Transverse colon (tissue), 4 donors: ENCODE measurements at regions of chrX and their contacts with region 1.

Region 1: DNA sequence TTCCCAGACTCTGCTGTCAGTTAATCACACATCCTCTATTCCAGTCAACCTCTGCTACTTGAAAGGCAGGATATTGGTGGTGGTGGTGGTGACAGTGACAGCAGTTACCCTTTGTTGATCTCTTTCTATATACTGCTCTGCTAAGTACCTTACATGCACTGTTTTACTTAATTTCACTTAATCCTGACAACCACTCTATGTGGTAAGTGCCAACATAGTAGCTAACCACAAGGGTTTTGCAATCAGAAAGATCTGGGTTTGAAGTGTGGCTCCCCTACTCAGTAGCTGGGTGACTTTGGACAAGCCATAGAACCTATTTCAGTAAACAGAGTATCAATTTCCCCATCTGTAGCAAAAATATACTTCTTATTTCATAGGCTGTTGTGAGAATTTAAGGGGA is 24.2 kb upstream of the F9 start:
- DNase-seq: no peak
- H3K4me3 ChIP-seq: no peak overlapping the region
- H3K27ac ChIP-seq: no peak overlapping the region
- H3K4me1 ChIP-seq: no peaks in the 10 kb centered on the region
- H3K27me3 ChIP-seq: no peaks in the 10 kb centered on the region
- CTCF ChIP-seq: no peak
- EP300 ChIP-seq: no peak
- POLR2A ChIP-seq: no peak

Region 2: DNA sequence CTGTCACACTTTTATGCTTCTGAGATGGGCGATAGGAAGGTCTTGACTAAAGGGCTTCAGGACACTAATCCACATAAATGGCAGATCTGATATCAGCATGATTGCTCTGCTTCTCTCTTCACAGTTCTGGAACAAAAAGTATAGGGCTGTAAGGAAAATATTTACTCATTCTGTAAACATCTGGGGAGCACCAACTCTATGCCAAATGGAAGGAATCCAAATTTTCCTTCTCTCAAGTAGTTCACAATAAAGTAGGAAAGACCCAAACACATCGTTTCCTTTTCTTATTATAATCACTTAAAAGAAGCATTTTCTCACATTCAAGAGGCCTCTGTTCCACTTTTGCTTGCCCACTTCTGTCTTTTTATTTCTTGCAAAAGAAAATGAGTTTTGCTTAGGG is 21.7 kb before region 1 on chrX:
- in situ Hi-C with region 1: no loop called
- intact Hi-C with region 1: loop called (anchors 1 kb)
- DNase-seq: no peak
- H3K4me3 ChIP-seq: no peak overlapping the region
- H3K27ac ChIP-seq: no peak overlapping the region
- H3K4me1 ChIP-seq: no peaks in the 10 kb centered on the region
- H3K27me3 ChIP-seq: no peaks in the 10 kb centered on the region
- CTCF ChIP-seq: no peak
- EP300 ChIP-seq: no peak
- POLR2A ChIP-seq: no peak